B cell (primary cell): ENCODE measurements at regions of chr12 and their contacts with region 1.

Region 1: DNA sequence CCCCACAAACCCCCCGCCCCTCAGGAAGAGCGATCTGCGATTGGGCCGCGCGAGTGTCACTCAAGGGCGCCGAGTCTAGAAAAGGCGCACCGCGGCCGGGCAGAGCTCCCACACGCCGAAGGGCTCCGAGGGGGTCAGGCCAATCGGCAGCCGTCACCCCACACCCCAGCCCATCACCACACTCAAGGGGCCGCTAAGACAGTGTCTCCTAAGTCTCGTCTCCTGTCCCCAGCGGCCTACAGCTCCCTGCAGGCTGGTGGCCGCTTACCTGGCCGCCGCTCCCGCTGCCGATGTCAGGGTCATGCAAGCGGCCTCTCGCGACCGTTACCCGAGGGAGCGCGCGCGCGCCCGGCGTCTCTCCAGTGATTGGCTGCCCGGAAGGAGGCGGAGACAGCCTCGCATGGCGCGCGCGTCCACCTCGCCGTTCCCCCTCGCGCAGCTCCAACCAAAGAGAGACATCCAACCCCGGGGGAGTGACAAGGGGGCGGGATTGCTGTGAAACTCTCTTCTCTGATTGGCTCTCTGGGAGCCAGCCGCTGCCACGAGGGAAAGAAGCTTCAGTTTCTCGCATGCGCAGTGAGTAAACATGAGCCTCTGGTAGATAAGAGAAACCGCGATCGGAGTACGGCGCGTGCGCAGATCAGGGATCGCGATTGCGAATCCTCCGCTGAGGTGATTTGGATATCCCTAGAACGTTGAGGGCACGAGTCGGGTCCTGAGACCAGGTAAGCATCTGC is at the starts of genes MPHOSPH9 and MTRFR:
- DNase-seq: peak; percentile 100
- ATAC-seq: peak; percentile 90
- H3K4me3 ChIP-seq: peak within 1 kb of the TSS; percentile 88 to 99 (median 96)
- H3K4me3 Mint-ChIP-seq: peak within 1 kb of the TSS; percentile 92
- H3K27ac ChIP-seq: peak within 1 kb of the TSS; percentile 84 to 93
- H3K27ac Mint-ChIP-seq: peak within 1 kb of the TSS; percentile 95
- H3K4me1 ChIP-seq: peaks cover 53 to 61% of the 10 kb centered on the region in 2 donors
- H3K4me1 Mint-ChIP-seq: peaks cover 67% of the 10 kb centered on the region
- H3K27me3 ChIP-seq: no peaks in the 10 kb centered on the region
- H3K27me3 Mint-ChIP-seq: no peaks in the 10 kb centered on the region
- CTCF ChIP-seq: no peak
- total RNA-seq, gene MPHOSPH9: 40.4 and 45.1 TPM in 2 replicates
- total RNA-seq, gene MTRFR: 45.5 and 49.0 TPM in 2 replicates

Region 2: GRCh38 chr12:122834104-122834920 is 398.7 kb before region 1 on chr12:
- CTCF ChIA-PET with region 1: interaction called, 3 read pairs
- POLR2A ChIA-PET with region 1: no interaction called
- intact Hi-C with region 1: loop called (anchors 1 kb)
- DNase-seq: peak; percentile 65
- ATAC-seq: no peak
- H3K4me3 ChIP-seq: peak overlapping the region; percentile 24 to 99 (median 45)
- H3K4me3 Mint-ChIP-seq: peak overlapping the region; percentile 98
- H3K27ac ChIP-seq: peak overlapping the region; percentile 25 to 38
- H3K27ac Mint-ChIP-seq: peak overlapping the region; percentile 88
- H3K4me1 ChIP-seq: peaks cover 32 to 35% of the 10 kb centered on the region in 2 donors
- H3K4me1 Mint-ChIP-seq: peaks cover 40% of the 10 kb centered on the region
- H3K27me3 ChIP-seq: no peaks in the 10 kb centered on the region
- H3K27me3 Mint-ChIP-seq: no peaks in the 10 kb centered on the region
- CTCF ChIP-seq: peak; percentile 34

Region 3: DNA sequence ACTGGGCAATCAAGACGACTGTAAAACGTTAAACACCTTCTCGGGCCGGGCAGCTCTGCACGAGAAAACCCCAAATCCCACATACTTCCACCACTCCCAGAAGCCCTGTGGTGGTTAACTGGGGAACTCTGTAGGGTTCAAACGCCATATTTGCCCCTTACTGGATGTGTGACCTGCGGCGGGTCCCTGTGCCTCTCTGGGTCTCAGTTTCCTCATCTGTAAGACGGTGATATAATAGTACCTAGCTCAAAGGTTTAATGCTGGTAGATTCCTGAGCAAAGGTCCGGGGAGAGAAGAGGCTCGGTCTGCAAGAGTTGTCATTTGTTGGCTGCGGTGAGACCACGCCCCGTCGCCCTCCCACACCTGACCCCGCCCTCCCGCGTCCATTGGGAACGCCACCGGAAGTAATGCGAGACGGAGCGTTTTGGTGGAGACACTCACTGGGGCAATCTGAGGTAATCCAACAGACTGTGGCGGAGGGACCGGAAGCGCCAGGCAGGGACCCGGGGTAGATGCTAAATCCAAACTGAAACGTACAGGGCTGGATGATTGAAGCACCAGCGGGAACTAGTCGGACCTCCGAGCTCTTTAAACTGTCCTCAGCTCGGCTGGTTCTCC is 258.6 kb before region 1 on chr12:
- CTCF ChIA-PET with region 1: interaction called, 24 read pairs
- POLR2A ChIA-PET with region 1: interaction called, 14 read pairs
- intact Hi-C with region 1: loop called (anchors 1 kb)
- DNase-seq: peak; percentile 98
- ATAC-seq: peak; percentile 89
- H3K4me3 ChIP-seq: peak overlapping the region; percentile 76 to 97 (median 90)
- H3K4me3 Mint-ChIP-seq: peak overlapping the region; percentile 100
- H3K27ac ChIP-seq: peak overlapping the region; percentile 91 to 99
- H3K27ac Mint-ChIP-seq: peak overlapping the region; percentile 98
- H3K4me1 ChIP-seq: peaks cover 19 to 36% of the 10 kb centered on the region in 2 donors
- H3K4me1 Mint-ChIP-seq: peaks cover 32% of the 10 kb centered on the region
- H3K27me3 ChIP-seq: no peaks in the 10 kb centered on the region
- H3K27me3 Mint-ChIP-seq: no peaks in the 10 kb centered on the region
- CTCF ChIP-seq: no peak

Region 4: GRCh38 chr12:123043536-123044001 is 189.4 kb before region 1 on chr12:
- CTCF ChIA-PET with region 1: interaction called, 212 read pairs
- POLR2A ChIA-PET with region 1: interaction called, 26 read pairs
- intact Hi-C with region 1: loop called (anchors 1 kb)
- DNase-seq: peak; percentile 75
- ATAC-seq: peak; percentile 94
- H3K4me3 ChIP-seq: no peak overlapping the region
- H3K4me3 Mint-ChIP-seq: peak overlapping the region; percentile 27
- H3K27ac ChIP-seq: no peak overlapping the region
- H3K27ac Mint-ChIP-seq: peak overlapping the region; percentile 22
- H3K4me1 ChIP-seq: peaks cover 9 to 11% of the 10 kb centered on the region in 2 donors
- H3K4me1 Mint-ChIP-seq: peaks cover 29% of the 10 kb centered on the region
- H3K27me3 ChIP-seq: no peaks in the 10 kb centered on the region
- H3K27me3 Mint-ChIP-seq: no peaks in the 10 kb centered on the region
- CTCF ChIP-seq: peak; percentile 55

Region 5: GRCh38 chr12:123271001-123271729 is 38.2 kb after region 1 on chr12:
- CTCF ChIA-PET with region 1: interaction called, 11 read pairs
- POLR2A ChIA-PET with region 1: interaction called, 5 read pairs
- intact Hi-C with region 1: no loop called
- DNase-seq: peak; percentile 81
- ATAC-seq: peak; percentile 74
- H3K4me3 ChIP-seq: peak overlapping the region in 3 of 5 experiments; percentile 52 to 56 (median 54)
- H3K4me3 Mint-ChIP-seq: no peak overlapping the region
- H3K27ac ChIP-seq: no peak overlapping the region
- H3K27ac Mint-ChIP-seq: no peak overlapping the region
- H3K4me1 ChIP-seq: peaks cover 31 to 37% of the 10 kb centered on the region in 2 donors
- H3K4me1 Mint-ChIP-seq: peaks cover 29% of the 10 kb centered on the region
- H3K27me3 ChIP-seq: peaks cover 0 to 6% (median 0%) of the 10 kb centered on the region in 4 experiments
- H3K27me3 Mint-ChIP-seq: no peaks in the 10 kb centered on the region
- CTCF ChIP-seq: peak; percentile 38

Region 6: DNA sequence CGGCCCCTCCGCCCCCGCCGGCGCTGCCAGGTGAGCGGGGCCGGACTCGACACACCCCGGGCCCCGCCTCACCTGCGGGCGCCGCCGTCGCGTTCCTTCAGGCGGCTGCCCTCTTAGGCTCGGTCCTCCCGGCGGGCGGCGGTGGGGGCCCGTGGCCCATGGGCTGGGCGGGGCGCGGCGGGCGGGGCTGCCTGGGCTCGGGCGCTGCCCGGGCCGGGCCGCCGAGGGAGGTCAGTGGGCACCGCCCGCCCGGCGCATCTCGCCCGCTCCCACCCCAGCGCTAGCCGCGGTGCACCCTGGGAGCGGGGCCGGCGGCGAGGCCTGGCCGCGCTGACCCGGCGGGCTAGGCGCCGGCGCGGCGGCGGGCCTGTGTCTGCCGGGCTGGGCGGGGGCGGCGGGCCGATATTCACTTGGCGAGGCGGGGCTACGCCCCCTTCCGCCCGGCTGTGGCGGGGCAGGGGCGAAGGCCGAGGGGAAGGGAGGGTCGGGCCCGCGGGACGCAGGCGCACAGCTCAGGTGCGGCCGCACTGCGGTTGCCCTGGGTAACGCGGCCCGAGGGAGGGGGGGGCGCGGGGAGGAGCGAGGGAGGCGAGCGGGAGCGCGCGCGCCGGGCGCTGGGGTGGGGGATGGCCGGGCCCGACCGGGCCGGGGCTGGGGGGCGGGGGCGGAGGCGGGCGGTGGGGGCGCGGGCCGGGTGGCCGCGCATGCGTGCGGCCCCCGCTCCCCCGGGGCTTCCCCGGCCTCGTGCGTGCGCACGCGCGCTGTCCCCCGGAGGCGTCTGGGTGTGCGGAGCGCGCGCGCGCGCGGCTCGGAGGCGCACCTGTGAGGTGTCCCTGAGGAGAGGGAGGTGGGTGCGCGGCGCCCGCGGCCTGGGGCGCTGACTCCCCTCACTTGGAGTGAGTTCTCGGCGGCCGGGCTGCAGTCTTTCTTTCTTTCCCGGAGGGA is 739.8 kb after region 1 on chr12 and contains the starts of genes CCDC92 and ZNF664:
- CTCF ChIA-PET with region 1: no interaction called
- POLR2A ChIA-PET with region 1: no interaction called
- intact Hi-C with region 1: loop called (anchors 2 kb)
- DNase-seq: peak; percentile 97
- ATAC-seq: peak; percentile 82
- H3K4me3 ChIP-seq: peak within 1 kb of the TSS; percentile 15 to 72 (median 62)
- H3K4me3 Mint-ChIP-seq: peak within 1 kb of the TSS; percentile 90
- H3K27ac ChIP-seq: peak within 1 kb of the TSS; percentile 16 to 71
- H3K27ac Mint-ChIP-seq: peak within 1 kb of the TSS; percentile 88
- H3K4me1 ChIP-seq: peaks cover 13 to 16% of the 10 kb centered on the region in 2 donors
- H3K4me1 Mint-ChIP-seq: peaks cover 16% of the 10 kb centered on the region
- H3K27me3 ChIP-seq: no peaks in the 10 kb centered on the region
- H3K27me3 Mint-ChIP-seq: no peaks in the 10 kb centered on the region
- CTCF ChIP-seq: no peak
- total RNA-seq, gene CCDC92: 33.6 and 36.2 TPM in 2 replicates
- total RNA-seq, gene ZNF664: 47.1 and 52.2 TPM in 2 replicates